Pancreas (tissue), 10 donors: ENCODE measurements at regions of chr3 and their contacts with region 1.

Region 1: GRCh38 chr3:100068826-100069225 is 45.5 kb downstream of the FILIP1L start:
- DNase-seq: peak; percentile 60 to 82 (median 72)
- ATAC-seq: peak; percentile 83 to 96 (median 94)
- H3K4me3 ChIP-seq: no peak overlapping the region
- H3K27ac ChIP-seq: no peak overlapping the region
- H3K4me1 ChIP-seq: no peaks in the 10 kb centered on the region
- H3K27me3 ChIP-seq: no peaks in the 10 kb centered on the region
- CTCF ChIP-seq: peak; percentile 50 to 57 (median 53)

Region 2: GRCh38 chr3:99833617-99834205 is 235.1 kb before region 1 on chr3:
- intact Hi-C with region 1: loop called in 1 of 3 experiments (anchors 10 kb)
- DNase-seq: no peak
- ATAC-seq: peak in 2 of 4 donors; percentile 20 to 25
- H3K4me3 ChIP-seq: no peak overlapping the region
- H3K27ac ChIP-seq: peak overlapping the region in 2 of 4 donors; percentile 2 to 4
- H3K4me1 ChIP-seq: peaks cover 3 to 7% (median 3%) of the 10 kb centered on the region in 3 donors
- H3K27me3 ChIP-seq: no peaks in the 10 kb centered on the region
- CTCF ChIP-seq: no peak